ENCODE measurements at regions of chr4 and their contacts with region 1.

Region 1: DNA sequence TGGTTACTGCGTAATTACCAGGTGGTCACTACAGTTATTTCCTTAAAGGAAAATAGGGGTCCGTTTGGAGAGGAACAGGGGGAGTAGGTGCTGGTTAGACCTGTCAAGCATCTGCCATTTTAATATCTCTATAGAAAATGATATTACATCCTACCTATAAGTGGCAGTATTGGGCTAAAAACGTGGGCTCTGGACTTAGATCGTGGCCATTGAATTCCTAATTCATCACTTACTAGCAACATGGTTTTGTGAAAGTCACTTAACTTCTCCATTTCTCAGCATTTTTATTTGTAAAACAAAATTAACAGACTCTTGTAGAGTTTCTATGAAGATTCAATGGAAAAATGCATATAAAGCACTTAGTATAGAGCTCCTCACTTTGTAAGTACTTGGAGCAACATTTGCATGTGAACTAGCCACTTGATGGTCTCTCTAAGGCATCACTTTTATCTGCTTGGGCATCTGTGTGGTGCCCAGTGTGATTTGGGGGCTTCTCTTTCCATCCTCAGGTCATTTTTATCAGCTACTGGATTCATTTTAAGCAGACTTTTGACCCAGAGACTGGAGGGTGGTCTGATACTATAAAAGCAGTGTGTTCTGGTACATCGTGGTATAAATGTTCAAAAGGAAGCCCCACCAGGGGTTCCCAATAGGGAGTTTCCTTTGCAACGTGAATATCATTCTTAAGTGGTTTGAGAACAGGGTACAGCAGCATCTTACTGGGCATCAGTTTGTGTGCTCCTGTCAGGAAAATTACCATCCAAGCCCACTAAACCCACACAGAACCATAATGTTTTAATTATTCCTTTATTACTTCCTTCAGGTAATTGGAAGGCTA is 42.7 kb upstream of the RASSF6 start:
- DNase-seq: no peak
- H3K4me3 ChIP-seq: no peak overlapping the region
- H3K27ac ChIP-seq: no peak overlapping the region
- H3K4me1 ChIP-seq: peaks cover 0 to 6% (median 3%) of the 10 kb centered on the region in 4 donors
- H3K27me3 ChIP-seq: no peaks in the 10 kb centered on the region
- CTCF ChIP-seq: peak; percentile 25 to 42 (median 33)
- EP300 ChIP-seq: no peak
- POLR2A ChIP-seq: no peak

Region 2: DNA sequence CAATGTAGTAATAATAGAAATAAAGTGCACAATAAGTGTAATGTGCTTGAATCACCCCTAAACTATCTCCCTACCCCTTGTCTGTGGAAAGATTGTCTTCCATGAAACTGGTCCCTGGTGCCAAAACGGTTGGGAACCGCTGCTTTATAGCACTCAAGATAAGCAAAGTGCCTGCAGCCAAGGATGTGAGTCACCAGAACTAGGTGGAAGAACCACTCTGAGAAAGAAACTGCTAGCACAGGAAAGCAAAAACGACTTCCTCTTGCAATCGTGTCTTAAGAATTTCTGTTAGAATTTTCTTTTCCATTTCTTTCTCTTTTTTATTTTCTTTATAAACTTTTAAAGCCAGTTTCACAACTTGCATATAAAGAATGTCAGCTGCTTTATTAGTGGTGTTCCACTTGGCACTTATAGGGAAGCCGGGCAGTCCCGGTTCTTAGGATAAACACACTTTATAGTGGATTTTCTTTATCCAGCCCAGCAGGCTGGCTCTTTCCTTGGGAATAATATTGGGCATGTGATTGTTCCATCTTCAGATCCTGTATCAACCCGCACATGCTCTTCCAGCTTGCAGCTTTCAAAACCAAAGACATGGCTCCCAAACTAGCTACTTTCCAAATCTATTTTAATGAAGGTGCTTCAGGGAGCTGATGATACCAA is 45.1 kb after region 1 on chr4:
- intact Hi-C with region 1: no loop called
- DNase-seq: no peak
- H3K4me3 ChIP-seq: no peak overlapping the region
- H3K27ac ChIP-seq: no peak overlapping the region
- H3K4me1 ChIP-seq: peaks cover 10 to 21% (median 18%) of the 10 kb centered on the region in 4 donors
- H3K27me3 ChIP-seq: no peaks in the 10 kb centered on the region
- CTCF ChIP-seq: no peak
- EP300 ChIP-seq: no peak
- POLR2A ChIP-seq: no peak

Region 3: GRCh38 chr4:73922766-73923630 is 260.1 kb after region 1 on chr4:
- intact Hi-C with region 1: loop called (anchors 10 kb)
- DNase-seq: no peak
- H3K4me3 ChIP-seq: no peak overlapping the region
- H3K27ac ChIP-seq: no peak overlapping the region
- H3K4me1 ChIP-seq: no peaks in the 10 kb centered on the region
- H3K27me3 ChIP-seq: no peaks in the 10 kb centered on the region
- CTCF ChIP-seq: peak in 2 of 3 experiments; percentile 16 to 29
- EP300 ChIP-seq: no peak
- POLR2A ChIP-seq: no peak

Measured in esophagus muscularis mucosa (tissue), 4 donors.